GM12878 (cell line): ENCODE measurements at regions of chr17 and their contacts with region 1.

Region 1: DNA sequence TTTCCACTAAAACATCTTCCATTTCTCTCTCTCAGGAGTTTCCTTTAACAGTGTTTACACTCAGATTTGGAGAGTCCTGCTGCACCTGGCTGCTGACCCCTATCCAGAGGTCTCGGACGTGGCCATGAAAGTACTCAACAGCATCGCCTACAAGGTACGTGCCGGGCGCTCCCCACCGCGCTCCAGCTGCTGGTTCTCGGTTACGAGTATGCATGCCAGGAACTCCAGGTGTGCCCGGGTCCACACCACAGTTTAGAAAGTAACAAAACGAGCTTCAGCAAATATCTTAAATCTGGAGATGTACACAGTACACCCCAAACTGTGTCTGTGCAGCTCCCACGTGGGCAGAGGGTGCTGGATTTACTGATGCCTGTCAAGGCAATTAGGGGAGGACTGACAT is 82.9 kb upstream of the CHMP6 start:
- DNase-seq: no peak
- ATAC-seq: no peak
- H3K4me3 ChIP-seq: no peak overlapping the region
- H3K27ac ChIP-seq: peak overlapping the region; percentile 87
- H3K4me1 ChIP-seq: peaks cover 40% of the 10 kb centered on the region
- H3K27me3 ChIP-seq: no peaks in the 10 kb centered on the region
- CTCF ChIP-seq: no peak
- EP300 ChIP-seq: no peak
- POLR2A ChIP-seq: no peak
- RAD21 ChIP-seq: no peak

Region 2: GRCh38 chr17:80855948-80856862 is 52.6 kb before region 1 on chr17:
- CTCF ChIA-PET with region 1: interaction called, 4 read pairs
- POLR2A ChIA-PET with region 1: interaction called, 4 read pairs
- RAD21 ChIA-PET with region 1: interaction called, 10 read pairs
- SMC1A ChIA-PET with region 1: interaction called, 3 read pairs
- in situ Hi-C with region 1: no loop called
- intact Hi-C with region 1: no loop called
- DNase-seq: peak; percentile 77
- ATAC-seq: peak; percentile 98
- H3K4me3 ChIP-seq: no peak overlapping the region
- H3K27ac ChIP-seq: peak overlapping the region; percentile 96
- H3K4me1 ChIP-seq: peaks cover 26% of the 10 kb centered on the region
- H3K27me3 ChIP-seq: no peaks in the 10 kb centered on the region
- CTCF ChIP-seq: no peak
- EP300 ChIP-seq: peak; percentile 98 to 99
- POLR2A ChIP-seq: no peak; the same call in 1 of the 2 replicates
- RAD21 ChIP-seq: peak; percentile 27; the same call in 1 of the 2 replicates

Region 3: GRCh38 chr17:80927791-80928216 is 19.0 kb after region 1 on chr17:
- CTCF ChIA-PET with region 1: interaction called, 14 read pairs
- POLR2A ChIA-PET with region 1: interaction called, 10 read pairs
- RAD21 ChIA-PET with region 1: interaction called, 30 read pairs
- SMC1A ChIA-PET with region 1: interaction called, 27 read pairs
- in situ Hi-C with region 1: no loop called
- intact Hi-C with region 1: loop called (anchors 2 kb)
- DNase-seq: no peak
- ATAC-seq: no peak
- H3K4me3 ChIP-seq: no peak overlapping the region
- H3K27ac ChIP-seq: no peak overlapping the region
- H3K4me1 ChIP-seq: peaks cover 7% of the 10 kb centered on the region
- H3K27me3 ChIP-seq: no peaks in the 10 kb centered on the region
- CTCF ChIP-seq: no peak
- EP300 ChIP-seq: no peak
- POLR2A ChIP-seq: no peak
- RAD21 ChIP-seq: no peak